ENCODE measurements at regions of chr19 and their contacts with region 1.

Region 1: DNA sequence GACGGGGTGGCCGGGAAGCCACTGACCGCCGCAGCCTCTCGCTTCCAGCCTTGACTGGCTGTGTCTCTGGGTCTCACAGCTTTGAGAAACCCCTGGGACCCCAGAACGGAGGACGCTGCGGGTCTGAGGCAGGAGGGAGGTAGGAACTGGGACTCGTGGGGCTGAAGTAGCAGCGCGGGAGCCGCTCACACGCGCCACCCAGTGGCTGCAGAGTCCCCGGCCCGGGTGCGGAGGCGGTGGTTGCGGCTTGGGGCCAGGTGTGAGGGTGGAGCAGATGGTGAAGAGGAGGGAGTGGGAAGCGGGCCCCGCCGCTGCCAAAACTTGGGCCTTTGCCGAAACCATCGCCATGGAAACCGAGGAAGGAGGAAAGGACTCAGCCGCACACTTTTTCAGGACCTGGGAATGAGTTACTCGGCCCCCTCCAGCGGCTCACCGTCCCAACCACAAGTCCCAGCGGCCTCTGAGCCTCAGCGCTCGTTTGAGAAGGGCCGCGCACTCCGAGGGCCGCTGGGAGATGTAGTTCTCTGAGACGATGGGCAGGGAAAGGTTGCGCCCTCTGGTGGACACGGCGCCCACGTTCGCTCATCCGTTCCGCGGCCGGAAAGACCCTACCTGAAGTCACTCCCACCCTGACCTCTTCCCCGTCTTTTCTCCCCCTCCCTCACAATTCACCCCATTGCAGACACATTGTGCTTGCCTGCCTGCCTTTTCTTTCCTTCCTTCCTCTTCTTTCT is 2.2 kb upstream of the SLC17A7 start:
- DNase-seq: peak; percentile 95 to 98 (median 95)
- ATAC-seq: peak; percentile 89 to 94 (median 90)
- H3K4me3 ChIP-seq: peak overlapping the region; percentile 55 to 79 (median 69)
- H3K27ac ChIP-seq: peak overlapping the region; percentile 54 to 95 (median 88)
- H3K4me1 ChIP-seq: peaks cover 0 to 20% (median 2%) of the 10 kb centered on the region in 12 donors
- H3K27me3 ChIP-seq: peaks cover 0 to 38% (median 26%) of the 10 kb centered on the region in 9 donors
- CTCF ChIP-seq: peak; percentile 72 to 93 (median 80)
- POLR2A ChIP-seq: no peak

Region 2: GRCh38 chr19:49224856-49225255 is 218.7 kb before region 1 on chr19:
- intact Hi-C with region 1: loop called in 9 of 10 experiments (anchors 1 to 10 kb)
- DNase-seq: peak in 4 of 5 donors; percentile 34 to 70 (median 46)
- ATAC-seq: peak; percentile 29 to 86 (median 77)
- H3K4me3 ChIP-seq: no peak overlapping the region
- H3K27ac ChIP-seq: no peak overlapping the region
- H3K4me1 ChIP-seq: peaks cover 0 to 6% (median 0%) of the 10 kb centered on the region in 12 donors
- H3K27me3 ChIP-seq: no peaks in the 10 kb centered on the region
- CTCF ChIP-seq: peak in 11 of 12 donors; percentile 22 to 53 (median 45)
- POLR2A ChIP-seq: no peak

Region 3: DNA sequence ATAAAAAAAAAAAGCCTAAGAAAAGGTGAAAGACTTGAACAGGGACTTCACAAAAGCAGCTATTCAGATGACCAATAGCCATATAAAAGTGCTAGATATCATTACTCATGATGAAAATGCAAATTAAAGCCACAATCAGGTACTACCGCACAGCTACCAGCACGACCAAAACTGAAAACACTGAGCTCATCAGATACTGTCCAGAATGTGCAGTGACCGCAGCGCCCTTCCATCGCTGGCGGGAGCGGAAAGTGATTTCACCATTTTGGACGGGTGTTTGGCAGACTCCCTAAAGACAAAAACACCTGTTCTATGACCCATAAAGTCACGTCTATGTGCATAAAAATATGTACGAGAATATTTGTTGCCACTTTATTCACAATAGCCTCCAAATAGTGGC is 179.3 kb before region 1 on chr19:
- intact Hi-C with region 1: loop called in 2 of 10 experiments (anchors 1 to 10 kb)
- DNase-seq: no peak
- ATAC-seq: no peak
- H3K4me3 ChIP-seq: no peak overlapping the region
- H3K27ac ChIP-seq: no peak overlapping the region
- H3K4me1 ChIP-seq: no peaks in the 10 kb centered on the region
- H3K27me3 ChIP-seq: no peaks in the 10 kb centered on the region
- CTCF ChIP-seq: no peak
- POLR2A ChIP-seq: no peak

Region 4: DNA sequence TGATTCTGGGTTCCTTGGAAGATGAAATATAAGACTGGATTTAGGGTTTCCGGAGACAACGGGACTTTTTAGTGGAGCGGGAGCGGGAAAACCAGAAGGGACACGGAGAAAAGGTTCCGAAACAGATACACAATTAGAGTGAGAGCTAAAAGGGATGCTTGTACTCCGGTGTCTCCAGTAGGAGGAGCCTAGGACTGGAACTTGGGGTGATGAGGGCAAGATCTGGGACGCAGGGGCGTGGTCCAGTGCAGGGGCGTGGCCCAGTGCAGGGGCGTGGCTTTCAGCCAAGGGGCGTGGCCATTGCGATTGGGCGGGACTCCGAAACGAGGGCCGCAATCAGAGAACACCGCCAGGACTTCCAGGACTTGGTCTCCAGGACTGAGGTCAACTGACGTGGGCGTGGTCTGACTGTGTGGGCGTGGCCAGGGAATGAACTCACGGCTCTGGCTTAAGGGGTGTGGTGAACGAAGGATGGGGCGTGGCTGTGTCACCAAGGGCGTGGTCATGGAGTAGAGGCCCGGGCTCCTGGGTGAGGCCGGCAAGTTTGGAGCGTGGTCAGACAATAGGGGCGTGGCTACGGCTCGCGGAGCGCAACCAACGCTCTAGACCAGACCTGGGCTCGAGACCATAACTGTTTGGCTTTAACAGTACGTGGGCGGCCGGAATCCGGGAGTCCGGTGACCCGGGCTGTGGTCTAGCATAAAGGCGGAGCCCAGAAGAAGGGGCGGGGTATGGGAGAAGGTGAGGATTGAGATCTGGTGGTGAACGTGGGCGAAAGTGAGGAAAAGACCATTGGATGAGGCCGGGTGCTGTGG is 80.1 kb before region 1 on chr19 and contains the start of gene DKKL1:
- intact Hi-C with region 1: loop called in 1 of 10 experiments (anchors 1 kb)
- DNase-seq: peak; percentile 98 to 100 (median 99)
- ATAC-seq: peak; percentile 88 to 95 (median 92)
- H3K4me3 ChIP-seq: peak within 1 kb of the TSS; percentile 16 to 97 (median 89)
- H3K27ac ChIP-seq: peak within 1 kb of the TSS; percentile 93 to 99 (median 98)
- H3K4me1 ChIP-seq: peaks cover 0 to 23% (median 7%) of the 10 kb centered on the region in 12 donors
- H3K27me3 ChIP-seq: peaks cover 0 to 12% (median 0%) of the 10 kb centered on the region in 9 donors
- CTCF ChIP-seq: peak in 7 of 12 donors; percentile 12 to 45 (median 26)
- POLR2A ChIP-seq: peak in 1 of 2 donors; percentile 69
- total RNA-seq, gene DKKL1: 0.51 TPM in 1 of 9 donors, not detected in the others